ENCODE measurements at regions of chr12 and their contacts with region 1.

Region 1: GRCh38 chr12:71731751-71732712 is 22.6 kb upstream of the RAB21 start:
- DNase-seq: peak; percentile 42
- ATAC-seq: peak; percentile 98
- H3K4me3 Mint-ChIP-seq: peak overlapping the region; percentile 22; the same call in 1 of the 2 replicates
- H3K27ac Mint-ChIP-seq: peak overlapping the region; percentile 79; the same call in 1 of the 2 replicates
- H3K4me1 Mint-ChIP-seq: peaks cover 11% of the 10 kb centered on the region
- H3K27me3 Mint-ChIP-seq: no peaks in the 10 kb centered on the region; the same call in 1 of the 2 replicates
- CTCF ChIP-seq: no peak; the same call in 1 of the 2 replicates

Region 2: DNA sequence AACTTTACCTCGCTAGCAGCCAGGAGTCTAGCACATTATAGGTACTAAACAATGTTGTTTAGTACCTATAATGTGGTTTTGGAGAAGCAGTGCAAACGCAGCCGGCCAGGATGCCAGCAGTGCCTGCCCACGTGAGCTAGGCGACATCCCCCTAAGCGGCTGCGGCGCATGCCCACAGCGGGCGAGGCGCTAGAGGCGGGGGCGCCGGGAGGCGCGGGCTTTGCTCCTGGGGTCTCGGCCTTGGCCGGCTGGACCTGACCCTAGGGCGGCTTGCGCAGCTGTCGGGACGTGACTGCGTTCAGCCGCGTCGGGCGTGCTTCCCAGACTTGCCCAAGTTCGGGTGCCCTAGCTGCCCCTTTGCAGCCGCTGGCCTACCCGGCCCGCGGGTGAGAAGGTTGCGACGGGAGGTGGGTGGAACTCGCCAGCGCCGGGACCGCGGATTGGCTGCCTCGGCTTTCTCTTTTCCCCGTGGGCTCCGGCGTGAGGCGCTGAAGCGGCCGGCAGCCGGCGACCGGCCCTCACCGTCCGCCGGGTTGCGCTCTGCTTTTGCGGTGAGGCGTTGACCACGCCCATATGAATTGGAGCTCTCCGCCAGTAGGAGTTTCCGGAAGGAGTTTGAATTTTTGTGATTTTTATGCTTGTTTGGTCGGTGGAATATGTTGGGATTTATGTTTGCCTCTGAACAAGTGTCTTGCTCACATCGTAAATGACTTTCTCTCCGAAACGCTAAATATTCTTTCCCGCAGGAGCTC is 45.9 kb before region 1 on chr12 and contains the start of gene TMEM19:
- CTCF ChIA-PET with region 1: interaction called, 10 read pairs
- POLR2A ChIA-PET with region 1: no interaction called
- DNase-seq: peak; percentile 86
- ATAC-seq: peak; percentile 95
- H3K4me3 Mint-ChIP-seq: peak within 1 kb of the TSS; percentile 95
- H3K27ac Mint-ChIP-seq: peak within 1 kb of the TSS; percentile 99
- H3K4me1 Mint-ChIP-seq: peaks cover 14% of the 10 kb centered on the region
- H3K27me3 Mint-ChIP-seq: no peaks in the 10 kb centered on the region
- CTCF ChIP-seq: no peak
- total RNA-seq, gene TMEM19: 10.7 to 15.6 TPM (median 11.7 TPM) in 3 replicates

Measured in WTC11 (cell line).